Kidney (tissue), 22 donors: ENCODE measurements at regions of chr1 and their contacts with region 1.

Region 1: DNA sequence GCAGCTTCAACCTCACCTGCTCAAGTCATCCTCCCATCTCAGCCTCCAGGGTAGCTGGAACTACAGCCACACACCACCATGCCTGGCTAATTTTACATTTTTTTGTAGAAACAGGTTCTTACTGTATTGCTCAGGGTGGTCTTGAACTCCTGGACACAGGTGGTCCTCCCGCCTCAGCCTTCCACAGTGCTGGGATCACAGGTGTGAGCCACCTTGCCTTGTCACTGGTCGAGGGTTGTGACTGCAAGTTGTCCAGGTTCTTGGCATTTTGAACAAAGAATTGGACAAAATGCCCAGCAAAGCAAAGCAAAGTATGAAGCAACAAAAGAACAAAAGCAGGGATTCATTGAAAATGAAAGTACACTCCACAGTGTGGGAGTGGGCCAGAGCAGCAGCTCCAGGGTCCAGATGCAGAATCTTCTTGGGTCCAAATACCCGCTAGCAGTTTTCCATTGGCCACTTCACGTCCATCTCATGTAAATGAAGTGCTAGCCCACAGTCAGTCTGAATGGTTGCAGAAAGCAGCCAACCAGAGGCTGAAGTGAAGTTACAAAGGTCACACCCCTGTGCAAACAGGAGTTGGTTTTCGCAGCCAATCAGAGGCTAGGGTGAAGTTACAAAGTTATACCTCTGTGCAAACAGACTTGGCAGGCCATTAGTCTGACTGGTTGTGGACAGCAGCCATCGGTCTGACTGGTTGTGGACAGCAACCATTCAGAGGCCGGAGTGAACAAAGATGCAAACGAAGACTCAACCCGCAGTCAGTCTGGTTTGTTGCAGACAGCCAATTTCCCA is 109.5 kb upstream of the KIF26B start:
- DNase-seq: no peak
- H3K4me3 ChIP-seq: peak overlapping the region in 2 of 3 donors; percentile 15 to 30
- H3K27ac ChIP-seq: no peak overlapping the region
- H3K4me1 ChIP-seq: peaks cover 0 to 3% (median 2%) of the 10 kb centered on the region in 3 donors
- H3K27me3 ChIP-seq: no peaks in the 10 kb centered on the region
- CTCF ChIP-seq: no peak

Region 2: DNA sequence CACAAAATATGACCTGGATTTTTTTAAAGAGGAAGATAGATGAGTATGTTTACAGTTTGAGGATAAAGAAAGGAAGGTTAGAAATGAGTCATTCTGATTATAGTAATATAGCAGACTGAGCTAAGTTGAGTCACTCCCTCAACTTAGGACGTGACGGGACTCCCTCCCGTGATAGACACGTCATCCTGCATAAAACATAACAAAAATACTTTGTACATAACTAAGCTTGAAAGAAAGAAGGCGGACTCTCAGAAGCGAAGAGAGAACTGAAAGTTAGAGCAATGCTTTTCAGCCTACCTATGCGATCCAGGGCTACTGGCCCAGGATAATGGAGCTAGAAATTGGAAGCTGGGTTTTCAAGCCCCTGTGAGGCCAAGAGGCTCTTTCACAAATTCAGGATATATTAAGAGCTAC is 445.3 kb before region 1 on chr1:
- intact Hi-C with region 1: loop called (anchors 10 kb)
- DNase-seq: no peak
- H3K4me3 ChIP-seq: no peak overlapping the region
- H3K27ac ChIP-seq: no peak overlapping the region
- H3K4me1 ChIP-seq: no peaks in the 10 kb centered on the region
- H3K27me3 ChIP-seq: no peaks in the 10 kb centered on the region
- CTCF ChIP-seq: no peak

Region 3: DNA sequence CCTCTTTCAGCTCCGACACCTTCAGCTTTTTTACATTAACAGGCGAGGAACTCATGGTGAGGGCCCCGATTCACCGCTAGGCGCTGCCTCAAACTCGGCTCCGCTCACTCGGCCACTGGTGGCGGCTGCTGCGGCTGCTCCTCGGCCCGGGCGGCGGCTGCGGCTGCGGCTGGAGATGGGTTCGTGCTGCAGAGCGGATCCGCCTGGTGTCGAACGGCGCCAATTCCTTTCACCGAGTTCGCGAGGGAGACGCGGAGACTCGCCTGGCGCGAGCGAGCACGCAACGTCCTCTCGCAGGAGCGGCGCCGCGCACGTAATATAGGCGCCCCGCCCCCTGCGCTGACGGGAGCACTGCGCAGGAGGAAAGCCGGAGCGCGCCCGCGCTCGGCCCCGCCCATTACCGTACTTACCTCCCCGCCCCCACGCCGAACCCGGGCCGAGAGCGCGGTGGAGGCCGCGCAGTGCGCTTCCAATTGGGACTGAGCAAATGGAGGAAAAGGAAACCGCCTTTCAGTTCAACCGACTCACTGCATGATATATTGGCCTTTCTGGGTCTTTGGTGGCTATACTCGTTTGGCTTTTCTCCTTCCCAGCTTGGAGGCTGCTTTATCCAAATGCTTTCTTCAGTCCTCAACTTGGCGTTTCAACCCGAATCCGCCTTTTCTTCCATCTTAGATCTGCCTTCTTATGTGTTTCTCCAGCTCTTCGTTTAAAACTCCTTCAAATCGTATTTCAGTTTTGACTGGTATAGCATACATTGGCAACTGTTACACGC is 180.8 kb before region 1 on chr1 and contains the start of gene HNRNPU:
- intact Hi-C with region 1: no loop called
- DNase-seq: peak; percentile 96 to 99 (median 98)
- H3K4me3 ChIP-seq: peak within 1 kb of the TSS; percentile 72 to 96 (median 92)
- H3K27ac ChIP-seq: peak within 1 kb of the TSS; percentile 99 to 100
- H3K4me1 ChIP-seq: peaks cover 9 to 20% (median 17%) of the 10 kb centered on the region in 3 donors
- H3K27me3 ChIP-seq: no peaks in the 10 kb centered on the region
- CTCF ChIP-seq: peak; percentile 29
- total RNA-seq, gene HNRNPU: 329 TPM